ENCODE measurements at regions of chr7 and their contacts with region 1.

Region 1: GRCh38 chr7:90178679-90179278 is 24.5 kb downstream of the STEAP1 start:
- DNase-seq: peak; percentile 94
- ATAC-seq: peak; percentile 95
- H3K4me3 ChIP-seq: peak overlapping the region; percentile 37; the same call in 1 of the 2 replicates
- H3K27ac ChIP-seq: peak overlapping the region; percentile 78
- H3K4me1 ChIP-seq: peaks cover 35% of the 10 kb centered on the region
- H3K27me3 ChIP-seq: no peaks in the 10 kb centered on the region
- CTCF ChIP-seq: no peak

Region 2: GRCh38 chr7:90155206-90155605 is 23.6 kb before region 1 on chr7:
- CTCF ChIA-PET with region 1: interaction called, 3 read pairs
- POLR2A ChIA-PET with region 1: no interaction called
- intact Hi-C with region 1: loop called (anchors 1 kb)
- DNase-seq: no peak
- ATAC-seq: no peak
- H3K4me3 ChIP-seq: peak overlapping the region; percentile 86
- H3K27ac ChIP-seq: no peak overlapping the region
- H3K4me1 ChIP-seq: peaks cover 34% of the 10 kb centered on the region
- H3K27me3 ChIP-seq: no peaks in the 10 kb centered on the region
- CTCF ChIP-seq: no peak

Region 3: DNA sequence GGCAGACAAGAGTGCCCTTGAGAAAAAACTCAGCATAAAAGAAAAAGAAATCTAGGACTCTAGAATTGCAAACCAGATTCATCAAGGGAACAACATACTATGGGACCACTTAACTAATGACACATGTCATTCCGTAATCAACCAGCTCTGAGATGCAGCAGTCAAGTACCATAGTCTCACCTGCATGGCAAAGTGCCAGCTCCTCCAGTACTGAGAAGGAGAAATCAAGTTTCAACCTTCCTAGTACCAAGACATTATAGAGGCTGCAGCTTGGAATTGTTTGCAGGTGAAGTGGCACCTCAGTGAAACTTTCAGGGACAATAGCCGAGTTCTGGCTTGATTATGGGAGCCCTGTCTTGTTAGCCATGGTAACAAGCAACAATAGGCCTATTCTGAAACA is 13.1 kb before region 1 on chr7:
- CTCF ChIA-PET with region 1: no interaction called
- POLR2A ChIA-PET with region 1: no interaction called
- intact Hi-C with region 1: no loop called
- DNase-seq: no peak
- ATAC-seq: no peak
- H3K4me3 ChIP-seq: no peak overlapping the region
- H3K27ac ChIP-seq: no peak overlapping the region
- H3K4me1 ChIP-seq: no peaks in the 10 kb centered on the region
- H3K27me3 ChIP-seq: no peaks in the 10 kb centered on the region
- CTCF ChIP-seq: no peak

Region 4: DNA sequence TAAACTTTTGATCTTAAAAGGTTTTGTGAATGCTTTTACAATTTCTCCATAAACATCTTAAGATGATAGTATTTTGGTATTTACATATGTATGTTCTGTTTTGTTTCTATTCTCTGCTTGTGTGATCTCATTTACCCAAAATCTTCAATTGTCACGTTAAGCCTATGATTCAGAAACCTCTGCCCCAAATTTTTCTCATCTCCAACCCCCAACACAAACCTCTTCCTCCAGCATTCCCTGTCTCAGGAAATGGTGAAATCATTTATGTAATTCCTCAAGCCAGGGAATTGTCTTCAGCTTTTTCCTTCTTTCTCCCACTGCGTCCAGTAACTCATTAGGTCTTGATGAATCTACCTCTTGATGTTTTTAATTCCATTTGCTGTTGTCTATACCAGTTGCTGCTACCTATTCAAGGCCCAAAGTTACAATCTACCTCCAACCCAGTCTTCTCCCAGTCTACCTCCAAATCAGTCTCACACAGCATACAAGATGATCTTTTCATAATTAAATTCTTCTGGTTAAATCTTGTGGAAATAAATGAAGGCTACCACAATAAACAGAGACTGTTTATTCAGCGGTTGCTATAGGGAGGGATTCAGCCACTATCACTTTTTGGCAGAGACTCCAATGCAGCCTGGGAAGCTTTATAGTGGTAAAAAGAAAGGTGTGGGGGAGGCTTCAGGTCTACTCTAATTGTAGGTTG is 72.0 kb after region 1 on chr7:
- CTCF ChIA-PET with region 1: no interaction called
- POLR2A ChIA-PET with region 1: no interaction called
- intact Hi-C with region 1: loop called (anchors 2 kb)
- DNase-seq: peak; percentile 54
- ATAC-seq: peak; percentile 68
- H3K4me3 ChIP-seq: peak overlapping the region; percentile 53
- H3K27ac ChIP-seq: peak overlapping the region; percentile 92
- H3K4me1 ChIP-seq: peaks cover 31% of the 10 kb centered on the region
- H3K27me3 ChIP-seq: no peaks in the 10 kb centered on the region
- CTCF ChIP-seq: no peak

Region 5: GRCh38 chr7:90717296-90718060 is 538.7 kb after region 1 on chr7:
- CTCF ChIA-PET with region 1: no interaction called
- POLR2A ChIA-PET with region 1: interaction called, 12 read pairs
- intact Hi-C with region 1: no loop called
- DNase-seq: no peak
- ATAC-seq: no peak
- H3K4me3 ChIP-seq: no peak overlapping the region
- H3K27ac ChIP-seq: no peak overlapping the region
- H3K4me1 ChIP-seq: peaks cover 6% of the 10 kb centered on the region; the same call in 1 of the 2 replicates
- H3K27me3 ChIP-seq: no peaks in the 10 kb centered on the region
- CTCF ChIP-seq: no peak

Measured in PC-3 (cell line).